ENCODE measurements at regions of chr17 and their contacts with region 1.

Region 1: GRCh38 chr17:66990047-66990446 is 25.5 kb downstream of the CACNG4 start:
- DNase-seq: no peak
- H3K4me3 ChIP-seq: no peak overlapping the region
- H3K27ac ChIP-seq: no peak overlapping the region
- H3K4me1 ChIP-seq: no peaks in the 10 kb centered on the region
- H3K27me3 ChIP-seq: peaks cover 0 to 17% of the 10 kb centered on the region in 2 donors
- CTCF ChIP-seq: no peak

Region 2: DNA sequence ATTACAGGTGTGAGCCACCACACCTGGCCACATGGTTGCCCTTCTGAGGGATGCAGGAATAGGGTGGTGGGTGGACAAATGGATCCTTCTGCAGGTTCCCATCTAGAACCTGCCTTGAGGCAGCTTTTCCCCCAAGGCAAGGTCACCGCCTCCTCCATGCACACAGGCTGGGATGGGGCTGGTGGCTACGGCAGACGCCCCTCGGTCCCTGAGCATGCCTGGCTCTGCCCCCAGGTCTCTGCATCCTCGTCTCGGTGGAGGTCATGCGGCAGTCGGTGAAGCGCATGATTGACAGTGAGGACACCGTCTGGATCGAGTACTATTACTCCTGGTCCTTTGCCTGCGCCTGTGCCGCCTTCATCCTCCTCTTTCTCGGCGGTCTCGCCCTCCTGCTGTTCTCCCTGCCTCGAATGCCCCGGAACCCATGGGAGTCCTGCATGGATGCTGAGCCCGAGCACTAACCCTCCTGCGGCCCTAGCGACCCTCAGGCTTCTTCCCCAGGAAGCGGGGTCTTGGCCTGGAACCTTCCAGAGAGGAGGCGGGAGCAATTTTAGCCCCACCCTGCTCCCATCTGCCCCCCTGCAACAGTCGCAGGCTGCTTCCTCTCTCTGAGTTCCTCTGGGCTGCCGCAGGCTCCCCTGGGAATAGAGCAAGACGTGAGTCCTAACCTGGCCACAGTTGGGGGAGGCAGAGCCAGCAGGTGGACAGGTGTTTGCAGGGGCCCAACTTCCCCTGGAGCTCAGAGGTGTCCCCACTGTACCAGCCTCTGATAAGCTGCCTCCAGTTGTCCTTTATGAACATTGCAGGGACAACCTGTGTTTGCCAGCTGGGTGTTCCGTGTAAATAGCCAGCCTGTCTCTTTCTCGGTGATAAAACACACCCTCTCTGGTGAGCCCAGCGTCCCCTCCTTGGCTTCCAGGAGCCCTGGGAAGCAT is 66.0 kb after region 1 on chr17:
- intact Hi-C with region 1: loop called (anchors 10 kb)
- DNase-seq: no peak
- H3K4me3 ChIP-seq: no peak overlapping the region
- H3K27ac ChIP-seq: no peak overlapping the region
- H3K4me1 ChIP-seq: no peaks in the 10 kb centered on the region
- H3K27me3 ChIP-seq: no peaks in the 10 kb centered on the region
- CTCF ChIP-seq: no peak